CD4-positive, alpha-beta memory T cell (primary cell): ENCODE measurements at regions of chr16 and their contacts with region 1.

Region 1: GRCh38 chr16:28524681-28525171 is 14.0 kb downstream of the NUPR1 start:
- DNase-seq: peak in 2 of 5 donors; percentile 5 to 14
- H3K4me3 ChIP-seq: no peak overlapping the region
- H3K4me3 Mint-ChIP-seq: no peak overlapping the region
- H3K27ac ChIP-seq: no peak overlapping the region
- H3K27ac Mint-ChIP-seq: peak overlapping the region in 4 of 7 donors; percentile 50 to 67 (median 52)
- H3K4me1 ChIP-seq: peaks cover 6% of the 10 kb centered on the region
- H3K4me1 Mint-ChIP-seq: peaks cover 4 to 8% (median 6%) of the 10 kb centered on the region in 4 donors
- H3K27me3 ChIP-seq: no peaks in the 10 kb centered on the region
- H3K27me3 Mint-ChIP-seq: no peaks in the 10 kb centered on the region

Region 2: DNA sequence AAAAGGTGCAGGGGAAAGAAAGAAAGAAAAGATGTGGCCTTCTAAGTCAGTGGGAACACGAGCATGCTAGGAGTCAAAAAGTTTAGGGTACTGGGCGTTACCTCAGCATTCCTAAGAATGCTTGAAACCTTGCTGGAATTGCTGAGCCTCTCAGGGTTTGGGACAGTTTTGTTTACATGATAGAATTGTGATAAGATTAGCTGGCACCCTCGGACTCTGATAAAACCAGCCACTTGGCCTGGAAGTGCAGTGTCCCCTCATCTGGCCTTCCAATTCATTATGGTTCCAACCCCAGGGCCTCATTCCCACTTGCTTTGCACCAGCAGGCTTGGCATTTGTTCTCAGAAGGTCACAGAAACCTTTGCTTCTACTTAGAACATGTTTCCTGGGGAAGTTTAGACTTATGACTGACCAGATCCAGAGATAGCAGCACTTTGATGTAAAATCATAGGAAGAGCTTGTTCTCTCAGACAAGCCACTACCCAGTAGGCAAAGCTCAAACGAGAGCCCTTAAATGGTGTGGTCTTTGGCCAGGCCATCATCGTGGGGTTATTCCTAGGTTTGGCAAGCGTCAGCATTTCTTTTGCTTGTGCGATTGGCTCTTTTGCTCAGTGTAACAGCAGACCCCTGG is 36.9 kb after region 1 on chr16:
- CTCF ChIA-PET with region 1: no interaction called
- POLR2A ChIA-PET with region 1: no interaction called
- intact Hi-C with region 1: loop called (anchors 5 kb)
- DNase-seq: no peak
- H3K4me3 ChIP-seq: no peak overlapping the region
- H3K4me3 Mint-ChIP-seq: no peak overlapping the region
- H3K27ac ChIP-seq: no peak overlapping the region
- H3K27ac Mint-ChIP-seq: peak overlapping the region in 3 of 7 donors; percentile 17 to 53 (median 22)
- H3K4me1 ChIP-seq: peaks cover 5% of the 10 kb centered on the region
- H3K4me1 Mint-ChIP-seq: peaks cover 18 to 49% (median 26%) of the 10 kb centered on the region in 4 donors
- H3K27me3 ChIP-seq: no peaks in the 10 kb centered on the region
- H3K27me3 Mint-ChIP-seq: no peaks in the 10 kb centered on the region